Activated T-helper 2 cell treated with anti-CD3 and anti-CD28 coated beads, Interferon-gamma antibody, Interleukin-2, Interleukin-4, amounts not matched to agents 10 μg/mL and 5 μg/mL and 100 μg/mL, durations not matched to agents 14 hours and 24 hours and 36 hours (primary cell): ENCODE measurements at regions of chr19 and their contacts with region 1.

Region 1: GRCh38 chr19:54463531-54464043 is at the start of gene LENG9:
- DNase-seq: peak; percentile 95
- H3K4me3 Mint-ChIP-seq: peak within 1 kb of the TSS; percentile 83
- H3K27ac Mint-ChIP-seq: peak within 1 kb of the TSS; percentile 92
- H3K4me1 Mint-ChIP-seq: peaks cover 12% of the 10 kb centered on the region
- H3K27me3 Mint-ChIP-seq: peaks cover 11% of the 10 kb centered on the region
- total RNA-seq, gene LENG9: 7.5 and 8.1 TPM in 2 replicates

Region 2: DNA sequence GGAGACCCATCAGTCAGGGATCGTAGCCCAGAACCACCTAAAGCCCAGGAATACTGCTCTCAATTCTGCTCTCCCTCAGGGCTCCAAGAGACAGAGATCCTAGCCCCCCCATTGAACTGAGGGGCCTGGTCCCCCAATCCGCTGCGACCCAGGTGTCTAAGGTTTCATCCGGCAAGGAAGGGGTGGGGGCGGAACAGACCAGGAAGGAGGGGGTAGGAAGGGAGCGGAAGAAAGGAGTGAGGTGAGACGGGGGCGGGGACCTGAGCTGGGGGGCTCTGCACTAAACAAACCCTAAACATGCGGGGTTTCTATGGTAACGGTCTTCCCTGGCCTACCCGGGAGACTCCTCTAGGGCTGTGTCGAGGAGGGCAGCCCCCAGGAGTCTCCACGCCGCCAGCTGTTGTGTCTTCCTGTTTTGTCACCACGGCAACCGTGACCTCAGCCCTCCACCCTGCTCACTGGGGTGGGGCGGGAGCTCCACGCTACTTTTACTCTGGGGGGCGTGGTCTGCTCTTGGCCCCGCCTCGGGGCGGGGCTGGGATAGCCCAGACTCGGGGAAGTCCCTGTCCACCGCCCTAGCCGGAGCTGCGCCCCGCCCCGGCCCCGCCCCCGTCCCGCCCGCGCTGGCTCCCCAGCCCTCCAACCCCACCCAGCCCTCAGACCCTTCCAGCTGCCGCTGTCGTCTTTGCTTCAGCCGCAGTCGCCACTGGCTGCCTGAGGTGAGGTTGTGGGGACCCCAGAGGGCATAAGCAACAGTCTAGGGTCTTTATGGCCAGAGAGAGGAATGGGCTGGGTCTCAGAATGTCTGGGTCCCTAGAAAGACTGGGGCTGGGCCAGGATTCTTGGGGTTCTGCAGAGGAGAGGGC is 596.1 kb before region 1 on chr19 and contains the start of gene MYADM:
- intact Hi-C with region 1: loop called (anchors 5 kb)
- DNase-seq: peak; percentile 100
- H3K4me3 Mint-ChIP-seq: peak within 1 kb of the TSS; percentile 98
- H3K27ac Mint-ChIP-seq: peak within 1 kb of the TSS; percentile 98
- H3K4me1 Mint-ChIP-seq: peaks cover 28% of the 10 kb centered on the region
- H3K27me3 Mint-ChIP-seq: no peaks in the 10 kb centered on the region
- total RNA-seq, gene MYADM: 96.3 and 102 TPM in 2 replicates

Region 3: DNA sequence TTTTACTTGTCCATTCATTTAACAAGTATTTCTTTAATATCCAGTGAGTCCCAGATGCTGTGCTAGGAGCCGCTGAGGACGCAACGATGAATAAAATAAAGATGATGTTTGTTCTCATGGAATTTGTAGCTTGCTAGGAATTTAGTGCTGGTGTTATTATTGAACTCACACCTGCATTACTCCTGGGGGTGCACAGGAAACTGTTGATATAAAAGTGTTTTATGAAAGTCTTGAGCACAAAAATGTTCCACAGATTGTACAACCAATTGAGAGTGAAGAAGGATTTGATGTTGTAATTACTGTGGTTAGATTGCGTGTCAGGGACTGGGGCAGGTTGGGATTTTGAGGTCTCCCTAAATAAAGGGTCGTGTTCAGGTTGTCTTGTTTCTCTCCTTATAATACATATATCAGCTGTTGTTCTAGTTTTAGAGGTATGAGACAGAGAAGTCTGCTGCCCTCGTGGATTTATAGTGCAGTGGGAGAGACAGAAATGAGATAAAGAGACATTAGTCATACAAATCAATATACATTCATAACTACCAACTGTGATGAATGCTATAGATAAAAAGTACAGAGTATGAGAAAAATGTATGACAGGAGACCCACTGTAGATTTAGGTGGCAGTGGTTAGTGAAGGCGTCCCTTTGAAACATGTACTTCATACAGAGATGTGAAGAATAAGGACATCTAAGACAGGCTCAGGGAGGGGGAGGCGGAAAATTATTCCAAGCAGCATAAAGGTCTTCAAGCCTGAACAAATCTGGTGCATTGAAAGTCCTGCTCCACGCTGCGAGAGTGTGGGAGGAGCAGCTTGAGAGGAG is 460.9 kb before region 1 on chr19:
- intact Hi-C with region 1: no loop called
- DNase-seq: no peak
- H3K4me3 Mint-ChIP-seq: no peak overlapping the region
- H3K27ac Mint-ChIP-seq: no peak overlapping the region
- H3K4me1 Mint-ChIP-seq: no peaks in the 10 kb centered on the region
- H3K27me3 Mint-ChIP-seq: no peaks in the 10 kb centered on the region

Region 4: DNA sequence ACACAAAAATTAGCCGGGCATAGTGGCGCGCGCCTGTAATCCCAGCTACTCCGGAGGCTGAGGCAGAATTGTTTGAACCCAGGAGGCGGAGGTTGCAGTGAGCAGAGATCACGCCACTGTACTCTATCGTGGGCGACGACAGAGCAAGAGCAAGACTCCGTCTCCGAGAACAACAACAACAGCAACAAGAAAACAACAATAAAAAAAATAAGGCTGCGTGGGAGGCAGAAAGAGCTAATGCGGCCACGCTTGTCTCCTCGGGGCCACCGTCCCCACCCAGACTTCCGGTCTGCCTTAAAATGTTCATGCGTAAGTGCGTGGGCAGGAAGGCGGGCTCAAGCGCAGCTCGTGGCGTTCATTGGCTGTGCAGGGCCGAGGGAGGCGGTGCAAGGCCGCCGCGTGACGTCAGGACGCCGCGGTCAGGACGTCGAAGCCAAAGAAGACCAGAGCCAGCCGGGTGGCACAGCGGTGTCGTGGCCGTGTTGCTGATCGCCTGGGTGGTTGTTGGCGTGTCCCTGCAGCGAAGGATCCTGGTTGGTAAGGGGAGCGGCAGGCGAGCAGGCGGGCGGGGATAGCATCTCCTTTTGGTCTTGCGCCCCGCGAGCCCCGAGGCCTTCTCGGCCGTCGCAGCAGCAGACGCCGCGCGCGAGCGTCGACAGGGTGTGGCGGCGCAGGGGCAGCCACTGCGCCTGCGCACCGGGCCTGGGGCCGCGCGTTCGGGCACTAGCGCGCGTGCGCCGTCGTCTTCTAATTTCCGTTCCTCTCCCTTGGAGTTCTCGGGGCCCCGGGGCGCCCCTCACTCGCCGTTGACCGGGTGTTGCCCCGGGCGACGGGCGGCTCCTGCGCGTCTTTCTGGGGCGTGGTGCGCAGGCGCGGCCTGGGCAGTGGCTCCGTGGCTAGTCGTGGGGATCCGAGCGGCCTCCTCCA is 14.6 kb before region 1 on chr19 and contains the start of gene LENG8:
- intact Hi-C with region 1: loop called (anchors 1 kb)
- DNase-seq: peak; percentile 97
- H3K4me3 Mint-ChIP-seq: peak within 1 kb of the TSS; percentile 100
- H3K27ac Mint-ChIP-seq: peak within 1 kb of the TSS; percentile 97
- H3K4me1 Mint-ChIP-seq: peaks cover 27% of the 10 kb centered on the region
- H3K27me3 Mint-ChIP-seq: no peaks in the 10 kb centered on the region
- total RNA-seq, gene LENG8: 203 and 209 TPM in 2 replicates

Region 5: GRCh38 chr19:54485851-54486250 is 22.3 kb after region 1 on chr19:
- intact Hi-C with region 1: no loop called
- DNase-seq: no peak
- H3K4me3 Mint-ChIP-seq: no peak overlapping the region
- H3K27ac Mint-ChIP-seq: no peak overlapping the region
- H3K4me1 Mint-ChIP-seq: peaks cover 21% of the 10 kb centered on the region
- H3K27me3 Mint-ChIP-seq: peaks cover 28% of the 10 kb centered on the region

Region 6: GRCh38 chr19:54551950-54552912 is 88.6 kb after region 1 on chr19:
- intact Hi-C with region 1: no loop called
- DNase-seq: no peak
- H3K4me3 Mint-ChIP-seq: no peak overlapping the region
- H3K27ac Mint-ChIP-seq: no peak overlapping the region
- H3K4me1 Mint-ChIP-seq: peaks cover 4% of the 10 kb centered on the region
- H3K27me3 Mint-ChIP-seq: peaks cover 2% of the 10 kb centered on the region

Region 7: GRCh38 chr19:55339048-55339888 is 875.7 kb after region 1 on chr19 and contains the start of gene KMT5C:
- intact Hi-C with region 1: loop called (anchors 5 kb)
- DNase-seq: peak; percentile 100
- H3K4me3 Mint-ChIP-seq: peak within 1 kb of the TSS; percentile 93
- H3K27ac Mint-ChIP-seq: peak within 1 kb of the TSS; percentile 95
- H3K4me1 Mint-ChIP-seq: peaks cover 14% of the 10 kb centered on the region
- H3K27me3 Mint-ChIP-seq: peaks cover 2% of the 10 kb centered on the region
- total RNA-seq, gene KMT5C: 34.3 and 35.3 TPM in 2 replicates

Region 8: GRCh38 chr19:55624109-55625003 is 1160.8 kb after region 1 on chr19 and contains the start of gene ZNF784:
- intact Hi-C with region 1: loop called (anchors 5 kb)
- DNase-seq: peak; percentile 89
- H3K4me3 Mint-ChIP-seq: peak within 1 kb of the TSS; percentile 89
- H3K27ac Mint-ChIP-seq: peak within 1 kb of the TSS; percentile 98
- H3K4me1 Mint-ChIP-seq: peaks cover 36% of the 10 kb centered on the region
- H3K27me3 Mint-ChIP-seq: peaks cover 6% of the 10 kb centered on the region
- total RNA-seq, gene ZNF784: 4.3 and 4.9 TPM in 2 replicates